Astrocyte of the cerebellum (primary cell): ENCODE measurements at regions of chr1 and their contacts with region 1.

Region 1: GRCh38 chr1:10601342-10602070 is 126.8 kb downstream of the PEX14 start:
- DNase-seq: no peak
- H3K4me3 ChIP-seq: no peak overlapping the region
- CTCF ChIP-seq: no peak

Region 2: DNA sequence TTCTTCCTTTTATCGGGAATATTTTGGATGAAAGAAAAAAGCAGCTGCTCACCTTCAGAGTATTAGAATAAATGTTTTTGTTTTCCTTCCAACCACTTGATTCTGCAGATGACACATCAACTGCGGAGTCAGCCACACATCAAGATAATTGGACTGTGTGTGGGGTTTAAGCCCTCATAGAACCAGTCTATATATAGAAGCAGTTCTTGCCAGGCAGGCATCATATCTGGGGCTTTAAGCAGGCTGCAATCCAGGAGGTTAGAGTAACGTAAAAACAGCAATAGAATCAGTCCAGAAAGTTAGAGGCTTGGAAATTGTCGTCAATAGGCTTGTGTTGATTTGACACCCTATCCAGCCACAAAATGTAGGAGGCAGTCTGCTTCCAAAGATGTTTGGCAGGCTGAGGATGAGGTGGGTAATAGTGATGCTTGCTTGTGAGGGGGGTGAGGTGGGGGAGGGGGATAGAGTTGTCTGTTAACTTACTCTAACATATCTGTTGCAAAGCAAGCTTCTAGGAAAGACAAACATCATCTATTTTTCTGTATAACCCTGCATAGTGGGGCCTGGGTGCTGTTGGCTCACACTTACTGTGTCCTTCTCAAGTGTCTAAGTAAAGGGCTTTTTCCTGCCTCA is 62.0 kb before region 1 on chr1:
- in situ Hi-C with region 1: loop called (anchors 5 kb)
- DNase-seq: peak; percentile 26
- H3K4me3 ChIP-seq: no peak overlapping the region
- CTCF ChIP-seq: no peak